IMR-90 (cell line): ENCODE measurements at regions of chr17 and their contacts with region 1.

Region 1: DNA sequence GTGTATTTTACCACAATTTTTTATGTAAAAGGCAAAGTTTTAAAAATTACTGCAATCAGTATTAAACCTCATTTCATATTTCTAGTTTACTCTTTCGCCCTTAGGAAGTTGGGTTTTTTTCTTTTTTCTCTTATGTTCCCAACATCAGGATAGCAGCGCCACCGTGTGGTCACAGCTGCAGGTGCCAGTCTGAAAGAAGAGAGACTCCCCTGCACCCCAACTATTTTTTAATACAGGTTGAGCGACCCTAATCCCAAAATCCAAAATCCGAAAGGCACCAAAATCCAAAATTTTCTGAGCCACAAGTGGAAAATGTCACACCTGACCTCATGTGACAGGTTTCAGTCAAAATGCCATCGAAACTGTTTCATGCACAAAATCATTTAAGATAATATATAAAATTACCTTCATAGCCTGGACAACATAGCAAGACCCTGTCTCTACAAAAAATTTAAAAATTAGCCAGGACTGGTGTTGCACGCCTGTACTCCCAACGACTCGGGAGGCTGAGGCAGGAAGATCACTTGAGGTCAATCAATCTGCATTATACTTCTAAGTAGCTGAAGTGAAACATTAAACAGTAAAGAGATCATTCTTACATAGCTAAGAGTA is 21.8 kb upstream of the ASGR2 start:
- DNase-seq: peak; percentile 69
- ATAC-seq: peak; percentile 44; the same call in 1 of the 2 replicates
- H3K4me3 ChIP-seq: no peak overlapping the region
- H3K27ac ChIP-seq: no peak overlapping the region
- H3K4me1 ChIP-seq: no peaks in the 10 kb centered on the region
- H3K27me3 ChIP-seq: peaks cover 47% of the 10 kb centered on the region
- CTCF ChIP-seq: peak; percentile 90
- POLR2A ChIP-seq: no peak
- RAD21 ChIP-seq: peak; percentile 88

Region 2: GRCh38 chr17:7114875-7115614 is 21.3 kb before region 1 on chr17:
- CTCF ChIA-PET with region 1: no interaction called
- POLR2A ChIA-PET with region 1: no interaction called
- dilution Hi-C with region 1: no loop called
- in situ Hi-C with region 1: no loop called
- intact Hi-C with region 1: no loop called
- DNase-seq: no peak
- ATAC-seq: no peak
- H3K4me3 ChIP-seq: no peak overlapping the region
- H3K27ac ChIP-seq: no peak overlapping the region
- H3K4me1 ChIP-seq: no peaks in the 10 kb centered on the region
- H3K27me3 ChIP-seq: peaks cover 20% of the 10 kb centered on the region
- CTCF ChIP-seq: no peak
- POLR2A ChIP-seq: no peak
- RAD21 ChIP-seq: no peak

Region 3: DNA sequence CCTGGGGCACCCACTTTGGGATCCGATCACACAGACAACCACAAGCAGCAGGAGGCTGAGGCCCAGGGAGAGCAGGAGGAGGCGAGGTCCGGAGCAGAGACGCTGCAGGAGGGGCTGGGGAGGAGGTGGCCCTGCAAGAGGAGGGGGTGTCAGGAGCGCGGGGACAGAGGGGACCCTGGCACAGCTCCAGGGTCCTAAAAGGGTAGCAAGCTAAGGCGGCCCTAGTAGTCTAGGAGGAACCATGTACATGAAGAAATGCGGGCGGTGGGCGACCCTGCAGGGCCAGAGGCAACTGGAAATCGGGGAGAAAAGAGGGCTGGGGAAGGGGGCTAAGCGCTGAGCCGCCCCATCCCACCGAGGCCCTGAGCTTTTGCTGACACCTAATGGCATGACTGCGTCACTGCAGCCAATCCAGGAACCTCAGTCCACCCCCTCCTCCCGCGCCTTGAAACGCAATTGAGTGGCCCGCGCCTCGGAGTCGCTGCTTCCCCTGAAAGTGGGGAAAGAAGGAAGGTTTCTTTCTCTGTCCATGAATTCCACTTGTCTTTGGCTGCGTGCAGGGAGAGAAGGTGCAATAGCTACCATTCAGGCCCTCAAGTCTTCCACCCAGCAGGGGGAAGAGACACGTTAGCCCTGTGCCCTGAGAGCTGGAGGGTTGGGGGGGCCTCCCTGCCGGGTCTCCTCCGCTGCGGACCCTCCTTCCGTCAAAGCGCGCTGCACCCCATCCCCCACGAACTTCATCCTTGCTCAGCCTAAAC is 41.0 kb after region 1 on chr17:
- CTCF ChIA-PET with region 1: interaction called, 3 read pairs
- POLR2A ChIA-PET with region 1: no interaction called
- dilution Hi-C with region 1: no loop called
- in situ Hi-C with region 1: no loop called
- intact Hi-C with region 1: loop called (anchors 2 kb)
- DNase-seq: peak; percentile 64
- ATAC-seq: peak; percentile 93
- H3K4me3 ChIP-seq: peak overlapping the region; percentile 59
- H3K27ac ChIP-seq: peak overlapping the region; percentile 21; the same call in 1 of the 2 replicates
- H3K4me1 ChIP-seq: peaks cover 2% of the 10 kb centered on the region; the same call in 1 of the 2 replicates
- H3K27me3 ChIP-seq: no peaks in the 10 kb centered on the region
- CTCF ChIP-seq: peak; percentile 90
- POLR2A ChIP-seq: no peak; the same call in 1 of the 2 replicates
- RAD21 ChIP-seq: peak; percentile 77

Region 4: GRCh38 chr17:7220582-7221277 is 84.4 kb after region 1 on chr17:
- CTCF ChIA-PET with region 1: no interaction called
- POLR2A ChIA-PET with region 1: no interaction called
- dilution Hi-C with region 1: no loop called
- in situ Hi-C with region 1: no loop called
- intact Hi-C with region 1: no loop called
- DNase-seq: peak; percentile 63
- ATAC-seq: peak; percentile 6
- H3K4me3 ChIP-seq: peak overlapping the region; percentile 66
- H3K27ac ChIP-seq: peak overlapping the region; percentile 73
- H3K4me1 ChIP-seq: peaks cover 19% of the 10 kb centered on the region
- H3K27me3 ChIP-seq: no peaks in the 10 kb centered on the region
- CTCF ChIP-seq: peak; percentile 55
- POLR2A ChIP-seq: peak; percentile 15
- RAD21 ChIP-seq: peak; percentile 61

Region 5: DNA sequence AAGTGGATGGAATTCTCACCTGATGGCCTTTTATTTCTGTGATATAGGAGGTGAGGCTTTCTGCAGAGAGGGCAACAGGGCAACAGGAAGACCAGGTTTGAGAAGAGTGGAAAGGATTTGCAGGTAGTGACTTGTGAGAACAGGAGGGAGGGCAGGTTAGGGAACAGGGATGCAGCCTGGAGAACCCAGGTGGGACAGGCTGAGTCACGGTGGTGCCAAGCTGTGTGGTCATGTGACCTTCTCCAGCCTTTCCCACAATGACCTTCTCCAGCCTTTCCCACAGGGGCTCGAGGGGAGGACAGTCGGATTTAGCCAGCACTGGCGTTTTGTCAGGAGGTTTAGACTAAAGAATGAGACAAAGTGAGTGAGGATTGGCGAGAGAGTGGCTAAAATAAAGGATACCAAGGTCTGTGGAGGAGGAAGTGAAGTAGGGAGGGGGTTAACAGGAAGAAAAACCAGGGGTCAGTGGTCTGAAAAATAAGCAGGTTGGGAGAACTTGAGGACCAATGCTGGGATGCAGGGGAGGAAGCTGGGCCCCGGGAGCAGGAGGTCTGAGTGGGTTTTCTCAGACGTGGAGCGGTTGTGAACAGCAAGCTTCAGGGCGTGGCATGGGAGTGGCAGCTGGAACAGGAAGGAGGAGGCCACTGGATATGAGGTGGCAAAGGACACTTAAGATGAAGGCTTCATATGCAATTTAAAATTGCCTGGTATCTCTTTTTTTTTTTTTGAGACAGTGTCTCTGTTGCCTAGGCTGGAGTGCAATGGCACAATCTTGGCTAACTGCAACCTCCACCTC is 618.9 kb after region 1 on chr17:
- CTCF ChIA-PET with region 1: no interaction called
- POLR2A ChIA-PET with region 1: no interaction called
- dilution Hi-C with region 1: no loop called
- in situ Hi-C with region 1: no loop called
- intact Hi-C with region 1: no loop called
- DNase-seq: no peak
- ATAC-seq: no peak
- H3K4me3 ChIP-seq: no peak overlapping the region
- H3K27ac ChIP-seq: no peak overlapping the region
- H3K4me1 ChIP-seq: peaks cover 5% of the 10 kb centered on the region
- H3K27me3 ChIP-seq: no peaks in the 10 kb centered on the region
- CTCF ChIP-seq: no peak
- POLR2A ChIP-seq: no peak
- RAD21 ChIP-seq: no peak